ENCODE measurements at regions of chr6 and their contacts with region 1.

Region 1: GRCh38 chr6:41683510-41684310 is 45.4 kb downstream of the MDFI start:
- H3K4me3 ChIP-seq: no peak overlapping the region
- H3K27ac ChIP-seq: no peak overlapping the region
- H3K4me1 ChIP-seq: no peaks in the 10 kb centered on the region
- CTCF ChIP-seq: peak; percentile 94

Region 2: GRCh38 chr6:40210628-40211056 is 1473.1 kb before region 1 on chr6:
- CTCF ChIA-PET with region 1: no interaction called
- POLR2A ChIA-PET with region 1: no interaction called
- H3K4me3 ChIP-seq: no peak overlapping the region
- H3K27ac ChIP-seq: no peak overlapping the region
- H3K4me1 ChIP-seq: no peaks in the 10 kb centered on the region
- CTCF ChIP-seq: no peak

Region 3: GRCh38 chr6:41424370-41425058 is 259.2 kb before region 1 on chr6:
- CTCF ChIA-PET with region 1: interaction called, 12 read pairs
- POLR2A ChIA-PET with region 1: no interaction called
- H3K4me3 ChIP-seq: no peak overlapping the region
- H3K27ac ChIP-seq: no peak overlapping the region
- H3K4me1 ChIP-seq: peaks cover 5% of the 10 kb centered on the region; the same call in 1 of the 2 replicates
- CTCF ChIP-seq: peak; percentile 51

Region 4: GRCh38 chr6:41608443-41609151 is 75.1 kb before region 1 on chr6:
- CTCF ChIA-PET with region 1: interaction called, 195 read pairs
- POLR2A ChIA-PET with region 1: no interaction called
- H3K4me3 ChIP-seq: no peak overlapping the region
- H3K27ac ChIP-seq: no peak overlapping the region
- H3K4me1 ChIP-seq: no peaks in the 10 kb centered on the region
- CTCF ChIP-seq: no peak

Region 5: GRCh38 chr6:41636833-41637193 is 46.9 kb before region 1 on chr6:
- CTCF ChIA-PET with region 1: interaction called, 12 read pairs
- POLR2A ChIA-PET with region 1: no interaction called
- H3K4me3 ChIP-seq: no peak overlapping the region
- H3K27ac ChIP-seq: no peak overlapping the region
- H3K4me1 ChIP-seq: no peaks in the 10 kb centered on the region; the same call in 1 of the 2 replicates
- CTCF ChIP-seq: no peak

Region 6: GRCh38 chr6:41705996-41706835 is 22.5 kb after region 1 on chr6:
- CTCF ChIA-PET with region 1: interaction called, 59 read pairs
- POLR2A ChIA-PET with region 1: no interaction called
- H3K4me3 ChIP-seq: no peak overlapping the region
- H3K27ac ChIP-seq: no peak overlapping the region
- H3K4me1 ChIP-seq: no peaks in the 10 kb centered on the region
- CTCF ChIP-seq: peak; percentile 76

Region 7: GRCh38 chr6:42197555-42198362 is 514.0 kb after region 1 on chr6:
- CTCF ChIA-PET with region 1: no interaction called
- POLR2A ChIA-PET with region 1: no interaction called
- H3K4me3 ChIP-seq: no peak overlapping the region
- H3K27ac ChIP-seq: no peak overlapping the region
- H3K4me1 ChIP-seq: peaks cover 7% of the 10 kb centered on the region; the same call in 1 of the 2 replicates
- CTCF ChIP-seq: no peak